Activated CD4-positive, alpha-beta memory T cell treated with anti-CD3 and anti-CD28 coated beads, Interleukin-2, amount 10 ng/mL, durations not matched to agents 7 days and 5 days (primary cell): ENCODE measurements at regions of chr9 and their contacts with region 1.

Region 1: DNA sequence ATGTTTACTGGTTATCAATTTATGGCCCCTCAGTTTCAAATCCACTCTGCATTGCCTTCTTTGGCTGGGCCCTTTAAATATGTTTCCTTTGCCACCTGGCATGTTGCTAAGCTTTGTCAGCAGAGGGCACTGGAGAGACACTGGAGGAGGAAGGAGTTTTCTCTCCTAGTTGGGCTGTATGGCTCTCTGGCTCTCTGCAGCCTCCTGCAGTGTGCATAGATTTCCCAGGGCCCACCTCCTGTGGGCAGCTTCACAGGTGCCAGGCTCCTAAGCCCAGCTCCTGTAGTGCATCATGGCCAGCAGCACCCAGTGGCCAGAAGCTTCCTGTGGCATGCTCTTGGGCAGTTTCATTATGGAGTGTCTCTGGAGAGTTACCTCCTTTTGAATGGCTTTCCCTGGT is 23.3 kb downstream of the CAVIN4 start:
- DNase-seq: peak; percentile 56
- H3K4me3 Mint-ChIP-seq: no peak overlapping the region
- H3K27ac Mint-ChIP-seq: no peak overlapping the region
- H3K4me1 Mint-ChIP-seq: peaks cover 19% of the 10 kb centered on the region
- H3K27me3 Mint-ChIP-seq: peaks cover 11% of the 10 kb centered on the region

Region 2: GRCh38 chr9:100294341-100294740 is 306.9 kb before region 1 on chr9:
- CTCF ChIA-PET with region 1: no interaction called
- POLR2A ChIA-PET with region 1: no interaction called
- DNase-seq: no peak
- H3K4me3 Mint-ChIP-seq: no peak overlapping the region
- H3K27ac Mint-ChIP-seq: no peak overlapping the region
- H3K4me1 Mint-ChIP-seq: no peaks in the 10 kb centered on the region
- H3K27me3 Mint-ChIP-seq: no peaks in the 10 kb centered on the region

Region 3: GRCh38 chr9:100554935-100555401 is 46.2 kb before region 1 on chr9:
- CTCF ChIA-PET with region 1: no interaction called
- POLR2A ChIA-PET with region 1: no interaction called
- DNase-seq: no peak
- H3K4me3 Mint-ChIP-seq: no peak overlapping the region
- H3K27ac Mint-ChIP-seq: no peak overlapping the region
- H3K4me1 Mint-ChIP-seq: no peaks in the 10 kb centered on the region
- H3K27me3 Mint-ChIP-seq: no peaks in the 10 kb centered on the region

Region 4: GRCh38 chr9:100590481-100590880 is 10.7 kb before region 1 on chr9:
- CTCF ChIA-PET with region 1: interaction called, 11 read pairs
- POLR2A ChIA-PET with region 1: no interaction called
- DNase-seq: no peak
- H3K4me3 Mint-ChIP-seq: no peak overlapping the region
- H3K27ac Mint-ChIP-seq: no peak overlapping the region
- H3K4me1 Mint-ChIP-seq: peaks cover 1% of the 10 kb centered on the region
- H3K27me3 Mint-ChIP-seq: peaks cover 1% of the 10 kb centered on the region

Region 5: GRCh38 chr9:100637787-100638186 is 36.6 kb after region 1 on chr9:
- CTCF ChIA-PET with region 1: no interaction called
- POLR2A ChIA-PET with region 1: no interaction called
- DNase-seq: no peak
- H3K4me3 Mint-ChIP-seq: no peak overlapping the region
- H3K27ac Mint-ChIP-seq: no peak overlapping the region
- H3K4me1 Mint-ChIP-seq: no peaks in the 10 kb centered on the region
- H3K27me3 Mint-ChIP-seq: peaks cover 6% of the 10 kb centered on the region

Region 6: DNA sequence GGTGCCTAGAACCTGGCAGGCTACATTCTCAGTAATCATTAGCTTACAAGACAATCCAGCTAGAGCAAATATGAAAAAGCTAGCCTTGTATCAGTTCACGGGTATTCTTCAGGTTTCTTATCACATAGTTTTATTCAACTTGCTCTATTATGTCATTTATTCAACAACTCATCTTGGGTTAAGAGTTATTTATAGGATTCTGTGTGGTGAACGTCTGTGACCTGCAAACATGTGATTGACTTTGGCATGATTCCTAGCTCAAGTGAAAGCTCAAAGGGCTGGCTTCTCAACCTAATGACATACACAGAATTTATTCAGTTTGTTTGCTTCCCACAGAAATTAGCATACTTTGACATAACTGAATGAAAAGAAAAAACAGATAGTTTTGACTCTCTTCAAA is 600.4 kb after region 1 on chr9:
- CTCF ChIA-PET with region 1: no interaction called
- POLR2A ChIA-PET with region 1: no interaction called
- DNase-seq: no peak
- H3K4me3 Mint-ChIP-seq: no peak overlapping the region
- H3K27ac Mint-ChIP-seq: no peak overlapping the region
- H3K4me1 Mint-ChIP-seq: no peaks in the 10 kb centered on the region
- H3K27me3 Mint-ChIP-seq: no peaks in the 10 kb centered on the region